ENCODE measurements at regions of chr18 and their contacts with region 1.

Region 1: GRCh38 chr18:49447810-49448745 is 12.4 kb downstream of the DYM start:
- DNase-seq: no peak
- H3K4me3 ChIP-seq: no peak overlapping the region
- H3K27ac ChIP-seq: no peak overlapping the region
- H3K4me1 ChIP-seq: no peaks in the 10 kb centered on the region
- H3K27me3 ChIP-seq: no peaks in the 10 kb centered on the region
- CTCF ChIP-seq: peak in 2 of 3 experiments; percentile 76 to 85; a peak in 3 of 4 replicates
- EP300 ChIP-seq: no peak
- POLR2A ChIP-seq: no peak
- RAD21 ChIP-seq: peak; percentile 92 to 93

Region 2: DNA sequence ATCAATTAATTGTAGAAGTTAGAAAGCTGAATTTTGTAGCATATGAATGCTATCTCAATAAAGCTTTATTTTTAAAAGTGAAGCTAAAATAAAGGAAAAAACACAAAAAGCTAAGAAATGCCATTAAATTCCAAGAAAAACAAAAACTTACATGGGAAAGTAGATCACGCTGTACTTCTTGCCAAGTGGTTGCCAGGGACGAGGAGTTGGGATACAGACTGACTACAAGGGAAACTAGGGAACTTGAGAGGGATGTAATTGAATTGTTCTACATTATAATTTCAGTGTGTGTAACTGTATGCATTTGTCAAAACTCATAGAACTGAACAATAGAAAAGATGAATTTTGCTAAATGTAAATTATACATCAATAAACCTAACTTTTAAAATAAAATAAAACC is 95.8 kb before region 1 on chr18:
- CTCF ChIA-PET with region 1: no interaction called
- POLR2A ChIA-PET with region 1: no interaction called
- DNase-seq: no peak
- H3K4me3 ChIP-seq: no peak overlapping the region
- H3K27ac ChIP-seq: no peak overlapping the region
- H3K4me1 ChIP-seq: no peaks in the 10 kb centered on the region
- H3K27me3 ChIP-seq: peaks cover 0 to 1% (median 0%) of the 10 kb centered on the region in 4 experiments; a peak in 1 of 7 replicates
- CTCF ChIP-seq: no peak
- EP300 ChIP-seq: no peak
- POLR2A ChIP-seq: no peak
- RAD21 ChIP-seq: no peak

Region 3: GRCh38 chr18:49459404-49460171 is 11.5 kb after region 1 on chr18:
- CTCF ChIA-PET with region 1: interaction called, 13 read pairs
- POLR2A ChIA-PET with region 1: interaction called, 4 read pairs
- DNase-seq: no peak
- H3K4me3 ChIP-seq: peak overlapping the region; percentile 76 to 97 (median 84)
- H3K27ac ChIP-seq: no peak overlapping the region
- H3K4me1 ChIP-seq: peaks cover 0 to 5% (median 2%) of the 10 kb centered on the region in 4 experiments; a peak in 4 of 7 replicates
- H3K27me3 ChIP-seq: no peaks in the 10 kb centered on the region
- CTCF ChIP-seq: no peak
- EP300 ChIP-seq: no peak
- POLR2A ChIP-seq: no peak
- RAD21 ChIP-seq: no peak